ENCODE measurements at regions of chr5 and their contacts with region 1.

Region 1: GRCh38 chr5:6820851-6821479 is 107.7 kb downstream of the TENT4A start:
- DNase-seq: peak; percentile 69
- H3K4me3 Mint-ChIP-seq: no peak overlapping the region
- H3K27ac Mint-ChIP-seq: no peak overlapping the region
- H3K4me1 Mint-ChIP-seq: peaks cover 12% of the 10 kb centered on the region
- H3K27me3 Mint-ChIP-seq: peaks cover 63% of the 10 kb centered on the region
- CTCF ChIP-seq: peak; percentile 62

Region 2: DNA sequence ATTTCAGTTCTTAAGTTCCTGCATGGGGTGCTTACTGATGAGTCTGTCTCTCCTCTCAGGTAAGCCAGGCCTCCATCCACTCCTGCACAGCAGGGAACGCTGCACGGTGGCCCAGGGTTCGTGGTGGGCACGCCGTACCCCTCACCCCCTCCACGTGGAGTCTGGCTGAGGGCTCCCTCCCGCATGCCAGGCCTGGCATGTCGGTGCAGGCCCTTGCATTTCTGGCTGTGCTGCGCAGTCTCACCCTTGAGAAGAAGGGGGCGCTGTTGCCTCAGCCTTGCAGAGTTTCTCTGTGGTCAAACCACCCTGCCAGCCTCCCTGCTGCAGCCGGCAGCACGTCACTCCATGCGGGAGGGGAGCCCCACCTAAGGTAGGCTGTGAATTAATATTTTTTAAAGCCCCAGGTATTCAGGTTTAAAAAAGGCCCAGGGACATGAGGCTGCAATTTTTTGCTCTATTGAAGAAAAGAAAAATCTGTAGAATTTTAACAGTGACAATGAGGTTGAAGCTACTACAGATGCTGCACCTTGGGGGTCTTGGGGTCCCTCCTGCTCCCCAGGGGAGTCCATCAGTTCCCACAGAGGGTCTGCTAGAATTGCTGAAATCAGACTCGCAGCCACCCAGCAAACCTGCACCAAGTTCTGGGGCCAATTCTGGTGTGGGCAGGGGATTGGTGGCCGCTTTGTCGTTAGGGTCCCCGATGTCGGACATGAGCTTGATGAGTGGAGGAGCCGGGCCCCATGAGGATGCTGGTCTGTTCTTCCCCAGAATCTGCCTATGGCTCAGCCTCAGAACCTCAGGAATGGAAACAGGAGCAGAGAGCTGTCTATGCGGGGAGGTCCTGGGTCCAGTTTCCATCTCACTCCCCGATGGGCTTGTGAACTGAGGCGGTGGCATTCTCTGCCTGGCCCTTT is 55.1 kb before region 1 on chr5:
- CTCF ChIA-PET with region 1: interaction called, 3 read pairs
- intact Hi-C with region 1: loop called (anchors 5 kb)
- DNase-seq: peak; percentile 91
- H3K4me3 Mint-ChIP-seq: peak overlapping the region; percentile 48
- H3K27ac Mint-ChIP-seq: peak overlapping the region; percentile 20
- H3K4me1 Mint-ChIP-seq: peaks cover 20% of the 10 kb centered on the region
- H3K27me3 Mint-ChIP-seq: no peaks in the 10 kb centered on the region
- CTCF ChIP-seq: peak; percentile 88

Region 3: GRCh38 chr5:6900247-6901227 is 79.6 kb after region 1 on chr5:
- CTCF ChIA-PET with region 1: no interaction called
- intact Hi-C with region 1: loop called (anchors 10 kb)
- DNase-seq: peak; percentile 40
- H3K4me3 Mint-ChIP-seq: no peak overlapping the region
- H3K27ac Mint-ChIP-seq: no peak overlapping the region
- H3K4me1 Mint-ChIP-seq: no peaks in the 10 kb centered on the region
- H3K27me3 Mint-ChIP-seq: no peaks in the 10 kb centered on the region
- CTCF ChIP-seq: no peak

Region 4: DNA sequence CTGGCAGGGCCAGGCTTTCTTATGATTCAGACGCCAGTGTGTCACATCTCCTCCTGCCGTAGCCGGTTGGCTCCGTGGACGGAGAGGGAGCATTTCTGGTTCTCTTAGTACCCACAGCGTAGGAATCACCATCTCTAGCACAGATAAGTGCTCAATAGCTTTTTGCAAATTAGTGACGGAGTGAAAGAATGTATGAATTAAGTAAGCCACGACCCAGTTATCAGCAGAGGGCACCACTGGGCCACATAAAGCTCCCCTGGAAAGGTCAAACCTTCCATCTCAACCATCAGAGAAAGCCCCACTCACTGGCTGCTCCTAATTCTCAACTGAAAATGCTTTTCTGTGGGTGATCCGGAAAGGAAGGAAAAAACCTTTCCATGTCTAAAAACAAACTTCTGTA is 257.9 kb after region 1 on chr5:
- CTCF ChIA-PET with region 1: no interaction called
- intact Hi-C with region 1: loop called (anchors 10 kb)
- DNase-seq: no peak
- H3K4me3 Mint-ChIP-seq: no peak overlapping the region
- H3K27ac Mint-ChIP-seq: no peak overlapping the region
- H3K4me1 Mint-ChIP-seq: no peaks in the 10 kb centered on the region
- H3K27me3 Mint-ChIP-seq: no peaks in the 10 kb centered on the region
- CTCF ChIP-seq: no peak

Region 5: GRCh38 chr5:7391814-7392692 is 571.1 kb after region 1 on chr5:
- CTCF ChIA-PET with region 1: no interaction called
- intact Hi-C with region 1: loop called (anchors 1 kb)
- DNase-seq: peak; percentile 18
- H3K4me3 Mint-ChIP-seq: no peak overlapping the region
- H3K27ac Mint-ChIP-seq: no peak overlapping the region
- H3K4me1 Mint-ChIP-seq: no peaks in the 10 kb centered on the region
- H3K27me3 Mint-ChIP-seq: peaks cover 9% of the 10 kb centered on the region
- CTCF ChIP-seq: no peak

Region 6: GRCh38 chr5:7745882-7746610 is 925.1 kb after region 1 on chr5:
- CTCF ChIA-PET with region 1: no interaction called
- intact Hi-C with region 1: loop called (anchors 5 kb)
- DNase-seq: peak; percentile 79
- H3K4me3 Mint-ChIP-seq: no peak overlapping the region
- H3K27ac Mint-ChIP-seq: no peak overlapping the region
- H3K4me1 Mint-ChIP-seq: no peaks in the 10 kb centered on the region
- H3K27me3 Mint-ChIP-seq: peaks cover 47% of the 10 kb centered on the region
- CTCF ChIP-seq: peak; percentile 67